ENCODE measurements at regions of chr22 and their contacts with region 1.

Region 1: DNA sequence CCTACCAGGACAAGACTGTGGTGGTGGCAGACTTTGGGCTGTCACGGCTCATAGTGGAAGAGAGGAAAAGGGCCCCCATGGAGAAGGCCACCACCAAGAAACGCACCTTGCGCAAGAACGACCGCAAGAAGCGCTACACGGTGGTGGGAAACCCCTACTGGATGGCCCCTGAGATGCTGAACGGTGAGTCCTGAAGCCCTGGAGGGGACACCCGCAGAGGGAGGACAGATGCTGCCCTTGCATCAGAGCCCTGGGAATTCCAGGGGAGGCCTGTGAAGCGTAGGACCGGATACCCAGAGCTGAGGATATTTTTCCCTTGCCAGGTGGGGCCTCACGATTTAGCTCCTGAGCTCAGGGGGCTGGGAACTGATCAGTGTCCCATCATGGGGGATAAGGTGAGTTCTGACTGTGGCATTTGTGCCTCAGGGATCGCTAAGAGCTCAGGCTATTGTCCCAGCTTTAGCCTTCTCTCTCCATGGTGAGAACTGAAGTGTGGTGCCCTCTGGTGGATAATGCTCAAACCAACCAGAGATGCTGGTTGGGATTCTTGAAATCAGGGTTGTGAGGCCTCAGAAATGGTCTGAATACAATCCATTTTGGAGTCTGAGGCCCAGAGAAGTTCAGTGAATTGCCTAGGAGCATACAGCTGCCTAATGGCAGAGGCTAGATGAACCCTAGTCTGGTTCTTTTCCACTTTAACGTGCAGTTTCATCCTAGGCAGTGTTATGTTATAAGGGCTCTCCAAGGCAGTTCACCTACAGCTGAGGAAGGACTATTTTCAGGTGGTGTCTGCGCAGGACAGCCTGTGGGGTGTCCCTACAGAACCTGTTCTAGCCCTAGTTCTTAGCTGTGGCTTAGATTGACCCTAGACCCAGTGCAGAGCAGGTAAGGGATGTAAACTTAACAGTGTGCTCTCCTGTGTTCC is 19.5 kb downstream of the PIK3IP1 start:
- DNase-seq: peak; percentile 67
- H3K4me3 Mint-ChIP-seq: no peak overlapping the region
- H3K27ac Mint-ChIP-seq: peak overlapping the region; percentile 40
- H3K4me1 Mint-ChIP-seq: peaks cover 24% of the 10 kb centered on the region
- H3K27me3 Mint-ChIP-seq: no peaks in the 10 kb centered on the region

Region 2: GRCh38 chr22:30582788-30583545 is 689.8 kb before region 1 on chr22:
- CTCF ChIA-PET with region 1: no interaction called
- POLR2A ChIA-PET with region 1: no interaction called
- intact Hi-C with region 1: no loop called
- DNase-seq: no peak
- H3K4me3 Mint-ChIP-seq: no peak overlapping the region
- H3K27ac Mint-ChIP-seq: no peak overlapping the region
- H3K4me1 Mint-ChIP-seq: no peaks in the 10 kb centered on the region
- H3K27me3 Mint-ChIP-seq: no peaks in the 10 kb centered on the region

Region 3: DNA sequence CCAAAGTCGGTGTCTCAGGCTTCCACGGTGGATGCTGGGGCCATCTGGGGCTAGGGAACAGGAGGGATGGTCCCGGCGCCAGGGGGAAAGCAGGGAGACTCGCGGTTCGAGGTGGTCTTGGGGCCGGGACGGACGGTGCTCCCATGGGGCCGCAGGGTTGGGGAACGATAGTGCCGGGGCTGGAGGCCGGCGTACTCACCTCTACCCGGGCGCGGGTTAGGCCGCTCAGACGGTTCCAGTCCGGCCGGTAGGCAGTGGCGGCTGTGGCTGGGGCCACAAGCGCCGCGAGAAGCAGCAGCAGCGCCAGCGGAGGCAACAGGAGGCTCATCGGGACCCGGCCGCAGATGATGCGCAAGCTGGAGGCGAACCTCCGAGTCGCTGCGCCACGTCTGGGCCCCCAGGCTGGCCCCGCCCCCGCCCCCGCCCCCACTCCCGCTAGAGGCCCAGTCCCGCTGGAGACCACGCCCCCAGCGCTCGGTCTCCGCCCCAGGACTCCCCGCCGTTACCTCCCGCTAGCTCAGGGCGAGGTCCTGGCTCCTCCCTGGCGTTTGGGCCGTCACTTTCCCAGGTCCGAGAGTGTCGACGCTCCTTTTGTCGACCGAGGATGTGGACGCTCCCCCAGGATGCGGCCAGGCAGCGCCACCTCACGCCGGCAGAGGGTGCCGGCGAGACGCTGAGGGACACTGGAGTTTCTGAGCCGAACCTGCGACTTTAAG is 165.4 kb before region 1 on chr22 and contains the start of gene SELENOM:
- CTCF ChIA-PET with region 1: interaction called, 49 read pairs
- POLR2A ChIA-PET with region 1: no interaction called
- intact Hi-C with region 1: no loop called
- DNase-seq: peak; percentile 94
- H3K4me3 Mint-ChIP-seq: peak within 1 kb of the TSS; percentile 80
- H3K27ac Mint-ChIP-seq: peak within 1 kb of the TSS; percentile 70
- H3K4me1 Mint-ChIP-seq: peaks cover 22% of the 10 kb centered on the region
- H3K27me3 Mint-ChIP-seq: no peaks in the 10 kb centered on the region
- total RNA-seq, gene SELENOM: 14.1 to 14.3 TPM

Region 4: GRCh38 chr22:31211862-31212730 is 60.7 kb before region 1 on chr22 and contains the start of gene LIMK2:
- CTCF ChIA-PET with region 1: interaction called, 79 read pairs
- POLR2A ChIA-PET with region 1: interaction called, 3 read pairs
- intact Hi-C with region 1: loop called (anchors 2 kb)
- DNase-seq: peak; percentile 98
- H3K4me3 Mint-ChIP-seq: peak within 1 kb of the TSS; percentile 83
- H3K27ac Mint-ChIP-seq: peak within 1 kb of the TSS; percentile 87
- H3K4me1 Mint-ChIP-seq: peaks cover 53% of the 10 kb centered on the region
- H3K27me3 Mint-ChIP-seq: no peaks in the 10 kb centered on the region
- total RNA-seq, gene LIMK2: 42.0 to 44.7 TPM

Region 5: DNA sequence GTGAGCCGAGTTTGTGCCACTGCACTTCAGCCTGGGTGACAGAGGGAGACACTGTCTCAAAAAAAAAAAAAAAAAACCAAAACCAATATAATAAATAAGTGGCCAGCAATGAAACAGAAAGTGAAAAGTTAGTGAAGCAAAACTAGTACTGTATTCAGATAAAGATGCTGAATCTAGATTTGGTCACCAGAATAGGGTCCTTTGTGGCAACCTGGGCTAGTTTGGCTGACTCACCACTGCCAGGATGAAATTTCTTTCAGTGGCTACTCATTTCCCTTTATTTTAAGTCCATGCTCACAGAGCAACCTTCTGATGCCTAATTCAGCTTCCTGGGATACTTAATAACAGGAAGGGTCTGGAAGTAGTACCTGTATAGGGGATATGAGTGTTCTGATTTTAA is 34.7 kb before region 1 on chr22:
- CTCF ChIA-PET with region 1: interaction called, 5 read pairs
- POLR2A ChIA-PET with region 1: no interaction called
- intact Hi-C with region 1: loop called (anchors 5 kb)
- DNase-seq: no peak
- H3K4me3 Mint-ChIP-seq: no peak overlapping the region
- H3K27ac Mint-ChIP-seq: no peak overlapping the region
- H3K4me1 Mint-ChIP-seq: peaks cover 19% of the 10 kb centered on the region
- H3K27me3 Mint-ChIP-seq: no peaks in the 10 kb centered on the region

Region 6: DNA sequence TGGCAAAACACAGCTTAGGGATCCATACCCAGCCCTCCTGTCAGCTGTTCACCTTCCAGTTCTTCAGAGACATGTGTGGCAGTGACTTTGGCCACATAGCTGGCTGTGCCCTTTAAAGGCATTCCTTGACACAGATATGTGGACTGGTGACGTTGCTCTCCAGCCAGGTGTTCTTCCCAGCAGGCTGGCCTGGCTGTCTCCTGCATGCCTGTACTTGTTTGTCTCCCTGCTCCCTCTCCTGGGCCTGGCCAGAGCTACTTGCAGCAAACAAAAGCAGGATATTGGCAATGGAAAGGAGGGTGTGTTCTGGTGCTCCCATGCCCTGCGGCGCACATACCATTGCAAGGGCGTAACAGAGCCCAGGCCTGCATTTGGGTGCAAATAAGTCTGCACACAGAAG is 18.8 kb before region 1 on chr22:
- CTCF ChIA-PET with region 1: interaction called, 43 read pairs
- POLR2A ChIA-PET with region 1: interaction called, 3 read pairs
- intact Hi-C with region 1: no loop called
- DNase-seq: no peak
- H3K4me3 Mint-ChIP-seq: no peak overlapping the region
- H3K27ac Mint-ChIP-seq: no peak overlapping the region
- H3K4me1 Mint-ChIP-seq: no peaks in the 10 kb centered on the region
- H3K27me3 Mint-ChIP-seq: no peaks in the 10 kb centered on the region

Measured in activated CD4-positive, alpha-beta memory T cell treated with anti-CD3 and anti-CD28 coated beads for 36 hours (primary cell).